CD14-positive monocyte (primary cell): ENCODE measurements at regions of chr2 and their contacts with region 1.

Region 1: DNA sequence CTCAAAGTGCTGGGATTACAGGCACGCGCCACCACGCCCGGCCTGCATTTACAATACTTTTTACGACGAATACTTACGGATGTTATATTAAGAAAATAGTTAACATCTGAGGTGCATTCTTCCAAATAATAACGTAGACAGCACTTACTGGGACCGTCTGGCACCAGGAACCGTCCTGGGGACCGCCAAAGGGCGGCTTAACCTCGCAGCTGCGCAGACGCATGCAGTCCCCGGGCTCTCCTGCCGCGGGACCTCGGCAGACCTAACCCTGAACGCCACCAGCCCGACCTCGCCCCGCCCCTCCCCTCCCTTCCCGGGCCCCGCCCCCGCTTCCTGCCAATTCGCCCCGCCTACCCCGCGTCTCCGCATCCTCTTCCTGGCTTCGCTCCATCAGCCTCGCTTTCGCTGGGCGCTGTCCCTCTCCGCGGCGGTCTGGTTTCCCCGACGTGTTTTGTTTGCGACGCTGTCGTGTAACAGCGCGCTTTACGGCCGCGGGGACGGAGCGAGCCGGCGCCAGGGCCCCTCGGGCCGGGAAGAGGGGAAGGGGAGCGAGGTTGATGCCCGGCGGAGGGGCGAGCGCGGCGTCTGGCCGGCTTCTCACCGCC is at the start of gene CNOT11:
- DNase-seq: peak; percentile 97 to 99 (median 98)
- H3K4me3 ChIP-seq: peak within 1 kb of the TSS; percentile 53 to 88 (median 77)
- H3K4me3 Mint-ChIP-seq: peak within 1 kb of the TSS; percentile 96
- H3K27ac ChIP-seq: peak within 1 kb of the TSS; percentile 71 to 95
- H3K27ac Mint-ChIP-seq: peak within 1 kb of the TSS; percentile 74 to 94 (median 92)
- H3K4me1 ChIP-seq: peaks cover 28 to 42% of the 10 kb centered on the region in 2 donors
- H3K4me1 Mint-ChIP-seq: peaks cover 44% of the 10 kb centered on the region
- H3K27me3 ChIP-seq: no peaks in the 10 kb centered on the region
- H3K27me3 Mint-ChIP-seq: no peaks in the 10 kb centered on the region
- CTCF ChIP-seq: no peak
- polyA plus RNA-seq, gene CNOT11: 38.2 to 39.0 (median 38.4) TPM

Region 2: DNA sequence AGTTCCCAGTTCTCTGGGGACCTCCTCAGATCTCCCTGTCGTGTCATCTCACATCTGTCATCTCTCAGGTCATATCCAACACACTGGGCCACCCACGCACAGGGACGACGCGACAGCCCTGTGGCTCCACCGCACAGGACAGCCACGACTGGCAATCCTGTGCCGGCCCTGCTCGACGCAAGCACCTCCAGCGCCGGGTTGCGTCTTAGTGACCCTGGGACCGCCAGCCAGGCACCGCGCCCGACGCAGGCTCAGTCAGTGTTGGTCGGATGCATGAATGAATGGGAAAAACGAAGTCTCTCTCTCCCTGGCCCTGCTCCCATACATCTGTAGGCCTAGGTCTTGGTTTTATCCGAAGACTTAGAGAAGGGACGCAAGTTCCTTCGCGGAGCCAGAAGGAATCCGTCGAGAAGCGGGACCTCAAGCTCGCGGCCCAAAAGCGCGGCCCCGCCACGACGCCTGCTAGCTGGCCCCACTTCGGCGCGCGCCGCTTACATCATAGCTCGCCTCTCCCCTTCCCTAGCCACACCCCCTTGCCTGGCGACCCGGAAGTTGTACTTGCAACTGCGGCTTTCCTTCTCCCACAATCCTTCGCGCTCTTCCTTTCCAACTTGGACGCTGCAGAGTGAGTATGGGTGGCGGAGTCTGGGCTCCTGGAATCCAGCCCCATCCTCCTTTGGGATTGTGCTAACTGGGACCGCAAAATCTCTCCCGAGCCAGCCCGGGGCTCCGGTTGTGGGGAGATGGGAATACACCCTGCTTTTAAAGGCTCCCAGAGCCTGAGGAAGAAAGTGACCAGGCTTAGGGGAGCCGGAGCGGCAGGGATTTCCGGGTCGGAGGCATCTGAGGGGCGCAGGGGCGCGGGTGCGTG is 250.6 kb before region 1 on chr2 and contains the start of gene RPL31:
- intact Hi-C with region 1: loop called in 1 of 2 experiments (anchors 2 kb)
- DNase-seq: peak; percentile 93 to 96 (median 95)
- H3K4me3 ChIP-seq: peak within 1 kb of the TSS; percentile 79 to 89 (median 86)
- H3K4me3 Mint-ChIP-seq: peak within 1 kb of the TSS; percentile 89 to 99
- H3K27ac ChIP-seq: peak within 1 kb of the TSS; percentile 80 to 91
- H3K27ac Mint-ChIP-seq: peak within 1 kb of the TSS; percentile 91 to 97 (median 93)
- H3K4me1 ChIP-seq: peaks cover 18 to 28% of the 10 kb centered on the region in 2 donors
- H3K4me1 Mint-ChIP-seq: peaks cover 34% of the 10 kb centered on the region
- H3K27me3 ChIP-seq: no peaks in the 10 kb centered on the region
- H3K27me3 Mint-ChIP-seq: peaks cover 4 to 6% (median 5%) of the 10 kb centered on the region in 3 donors
- CTCF ChIP-seq: no peak
- polyA plus RNA-seq, gene RPL31: 1,537 to 2,299 (median 1,998) TPM

Region 3: GRCh38 chr2:101308432-101309210 is 56.1 kb after region 1 on chr2 and contains the start of gene RNF149:
- intact Hi-C with region 1: loop called (anchors 5 kb)
- DNase-seq: peak; percentile 99
- H3K4me3 ChIP-seq: peak within 1 kb of the TSS; percentile 91 to 98 (median 98)
- H3K4me3 Mint-ChIP-seq: peak within 1 kb of the TSS; percentile 94 to 98
- H3K27ac ChIP-seq: peak within 1 kb of the TSS; percentile 94 to 96
- H3K27ac Mint-ChIP-seq: peak within 1 kb of the TSS; percentile 92 to 99 (median 95)
- H3K4me1 ChIP-seq: peaks cover 64 to 68% of the 10 kb centered on the region in 2 donors
- H3K4me1 Mint-ChIP-seq: peaks cover 69% of the 10 kb centered on the region
- H3K27me3 ChIP-seq: no peaks in the 10 kb centered on the region
- H3K27me3 Mint-ChIP-seq: peaks cover 0 to 3% (median 0%) of the 10 kb centered on the region in 3 donors
- CTCF ChIP-seq: no peak
- polyA plus RNA-seq, gene RNF149: 112 to 148 (median 141) TPM

Region 4: GRCh38 chr2:101341901-101342624 is 89.6 kb after region 1 on chr2:
- intact Hi-C with region 1: no loop called
- DNase-seq: peak; percentile 54 to 76 (median 69)
- H3K4me3 ChIP-seq: no peak overlapping the region
- H3K4me3 Mint-ChIP-seq: peak overlapping the region in 1 of 2 donors; percentile 65
- H3K27ac ChIP-seq: no peak overlapping the region
- H3K27ac Mint-ChIP-seq: peak overlapping the region in 2 of 7 donors; percentile 3 to 68
- H3K4me1 ChIP-seq: peaks cover 26 to 31% of the 10 kb centered on the region in 2 donors
- H3K4me1 Mint-ChIP-seq: peaks cover 25% of the 10 kb centered on the region
- H3K27me3 ChIP-seq: no peaks in the 10 kb centered on the region
- H3K27me3 Mint-ChIP-seq: peaks cover 0 to 7% (median 5%) of the 10 kb centered on the region in 3 donors
- CTCF ChIP-seq: peak; percentile 94